AG04450 (cell line): ENCODE measurements at regions of chr14 and their contacts with region 1.

Region 1: GRCh38 chr14:75208843-75209242 is 32.4 kb upstream of the TMED10 start:
- DNase-seq: no peak
- H3K4me3 ChIP-seq: no peak overlapping the region
- H3K27ac ChIP-seq: no peak overlapping the region
- H3K27me3 ChIP-seq: no peaks in the 10 kb centered on the region
- CTCF ChIP-seq: no peak

Region 2: DNA sequence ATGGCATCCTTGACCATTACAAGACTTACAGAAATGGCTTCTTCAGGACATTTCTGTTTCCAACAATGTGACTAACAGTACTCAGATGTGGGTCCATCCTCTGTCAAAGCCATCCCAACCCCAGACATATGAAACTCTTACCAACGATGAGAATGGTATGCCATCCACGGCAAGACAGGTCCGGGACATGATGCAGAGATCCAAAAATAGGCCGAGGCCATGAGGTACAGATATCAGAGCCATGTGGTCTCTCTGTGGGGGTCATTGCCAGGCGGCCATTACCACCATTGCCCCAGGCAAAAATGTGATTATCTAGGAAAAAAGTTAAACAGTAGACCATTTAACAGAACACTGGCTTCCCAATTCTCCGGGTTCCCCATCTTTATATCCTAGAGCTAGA is 111.9 kb before region 1 on chr14:
- CTCF ChIA-PET with region 1: interaction called, 12 read pairs
- POLR2A ChIA-PET with region 1: no interaction called
- DNase-seq: no peak
- H3K4me3 ChIP-seq: no peak overlapping the region
- H3K27ac ChIP-seq: no peak overlapping the region
- H3K27me3 ChIP-seq: no peaks in the 10 kb centered on the region
- CTCF ChIP-seq: no peak

Region 3: DNA sequence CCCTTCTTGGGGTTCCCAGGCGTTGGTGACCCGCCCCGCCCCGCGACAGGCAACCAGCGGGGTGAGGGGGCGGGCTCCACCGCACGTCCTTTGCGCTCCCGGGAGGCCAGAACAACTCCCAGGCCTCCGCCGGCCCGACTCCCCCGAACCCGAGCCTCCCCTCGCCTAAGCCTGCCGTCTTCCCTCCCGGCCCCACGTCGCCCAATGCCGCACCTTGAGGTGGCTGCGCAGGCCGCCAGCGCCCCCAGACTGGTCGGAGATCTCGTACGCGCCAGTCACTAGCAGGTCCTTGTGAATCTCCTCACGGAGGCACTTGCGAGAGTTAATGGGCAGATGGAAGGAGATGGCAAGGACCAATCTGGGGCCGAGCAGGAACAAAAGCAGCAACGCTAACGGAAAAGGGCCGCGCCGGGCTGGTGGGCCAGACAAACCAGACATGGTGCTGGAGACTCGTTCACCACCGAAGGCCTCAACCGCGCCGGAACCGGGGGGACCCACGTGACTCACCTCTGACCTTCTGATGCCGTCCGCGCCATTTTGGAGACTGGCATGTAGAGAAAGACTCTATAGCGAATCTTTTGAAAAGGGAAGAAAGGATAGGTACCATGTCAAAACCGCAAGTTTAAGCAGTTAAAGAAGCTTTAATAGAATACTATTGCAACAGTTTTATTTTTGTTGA is 32.6 kb before region 1 on chr14 and contains the start of gene TMED10:
- CTCF ChIA-PET with region 1: no interaction called
- POLR2A ChIA-PET with region 1: no interaction called
- DNase-seq: peak; percentile 59
- H3K4me3 ChIP-seq: peak within 1 kb of the TSS; percentile 95
- H3K27ac ChIP-seq: peak within 1 kb of the TSS; percentile 94
- H3K27me3 ChIP-seq: no peaks in the 10 kb centered on the region
- CTCF ChIP-seq: no peak
- polyA plus RNA-seq, gene TMED10: 406 and 414 TPM in 2 replicates

Region 4: GRCh38 chr14:75333606-75334548 is 125.0 kb after region 1 on chr14:
- CTCF ChIA-PET with region 1: no interaction called
- POLR2A ChIA-PET with region 1: no interaction called
- DNase-seq: no peak
- H3K4me3 ChIP-seq: no peak overlapping the region
- H3K27ac ChIP-seq: no peak overlapping the region
- H3K27me3 ChIP-seq: peaks cover 12% of the 10 kb centered on the region
- CTCF ChIP-seq: no peak

Region 5: DNA sequence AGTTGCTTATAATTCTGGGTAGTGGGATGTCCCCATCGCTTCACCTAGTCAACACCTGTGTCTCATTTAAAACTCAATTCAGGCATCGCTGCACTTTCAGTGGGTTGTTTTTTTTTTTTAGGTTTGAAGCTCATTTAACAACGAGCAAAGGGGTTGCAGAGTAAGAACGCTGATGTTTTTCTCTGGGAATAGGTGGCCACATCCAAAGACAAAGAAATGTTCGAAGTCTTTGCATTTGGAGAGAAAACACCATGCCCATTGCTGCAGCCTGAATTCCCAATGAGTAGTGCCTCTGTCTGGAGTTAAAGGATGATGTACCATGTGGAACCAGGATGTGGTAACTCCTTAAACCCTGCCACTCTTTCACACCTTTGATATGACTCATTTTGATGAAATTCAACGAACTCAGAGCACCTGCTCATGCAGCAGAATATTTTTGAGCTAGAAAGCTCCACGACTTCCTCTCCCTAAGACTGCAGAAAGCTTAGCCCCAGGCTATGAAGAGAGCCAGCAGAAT is 278.4 kb after region 1 on chr14:
- CTCF ChIA-PET with region 1: no interaction called
- POLR2A ChIA-PET with region 1: no interaction called
- DNase-seq: no peak
- H3K4me3 ChIP-seq: no peak overlapping the region
- H3K27ac ChIP-seq: no peak overlapping the region
- H3K27me3 ChIP-seq: peaks cover 14% of the 10 kb centered on the region
- CTCF ChIP-seq: no peak